ENCODE measurements at regions of chr21 and their contacts with region 1.

Region 1: GRCh38 chr21:15514073-15514946 is 215.5 kb upstream of the USP25 start:
- DNase-seq: peak; percentile 72
- H3K4me3 Mint-ChIP-seq: peak overlapping the region; percentile 55
- H3K27ac Mint-ChIP-seq: peak overlapping the region; percentile 85
- H3K4me1 Mint-ChIP-seq: peaks cover 28% of the 10 kb centered on the region
- H3K27me3 Mint-ChIP-seq: no peaks in the 10 kb centered on the region

Region 2: DNA sequence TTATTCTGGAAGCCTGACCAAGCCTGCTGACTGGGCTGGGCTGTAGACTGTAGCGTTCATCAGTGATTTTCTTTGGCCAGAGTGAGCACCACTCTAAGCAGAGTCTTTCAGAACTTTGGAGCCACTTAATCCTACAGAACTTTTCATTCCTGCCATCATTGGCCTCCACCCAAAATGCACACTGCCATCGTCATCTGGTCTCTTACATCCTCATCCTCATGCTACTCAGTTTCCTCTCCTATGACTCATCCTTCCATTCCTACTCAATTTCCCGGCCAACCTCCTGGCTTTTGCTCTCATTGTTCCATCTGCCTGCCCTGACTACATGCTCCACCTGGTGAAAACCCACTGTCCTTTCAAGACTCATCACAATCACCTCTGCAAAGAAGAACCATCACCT is 18.3 kb before region 1 on chr21:
- CTCF ChIA-PET with region 1: interaction called, 4 read pairs
- intact Hi-C with region 1: loop called (anchors 1 kb)
- DNase-seq: no peak
- H3K4me3 Mint-ChIP-seq: no peak overlapping the region
- H3K27ac Mint-ChIP-seq: no peak overlapping the region
- H3K4me1 Mint-ChIP-seq: peaks cover 2% of the 10 kb centered on the region
- H3K27me3 Mint-ChIP-seq: no peaks in the 10 kb centered on the region

Measured in activated naive CD4-positive, alpha-beta T cell treated with anti-CD3 and anti-CD28 coated beads for 36 hours (primary cell).